ENCODE measurements at regions of chr12 and their contacts with region 1.

Region 1: DNA sequence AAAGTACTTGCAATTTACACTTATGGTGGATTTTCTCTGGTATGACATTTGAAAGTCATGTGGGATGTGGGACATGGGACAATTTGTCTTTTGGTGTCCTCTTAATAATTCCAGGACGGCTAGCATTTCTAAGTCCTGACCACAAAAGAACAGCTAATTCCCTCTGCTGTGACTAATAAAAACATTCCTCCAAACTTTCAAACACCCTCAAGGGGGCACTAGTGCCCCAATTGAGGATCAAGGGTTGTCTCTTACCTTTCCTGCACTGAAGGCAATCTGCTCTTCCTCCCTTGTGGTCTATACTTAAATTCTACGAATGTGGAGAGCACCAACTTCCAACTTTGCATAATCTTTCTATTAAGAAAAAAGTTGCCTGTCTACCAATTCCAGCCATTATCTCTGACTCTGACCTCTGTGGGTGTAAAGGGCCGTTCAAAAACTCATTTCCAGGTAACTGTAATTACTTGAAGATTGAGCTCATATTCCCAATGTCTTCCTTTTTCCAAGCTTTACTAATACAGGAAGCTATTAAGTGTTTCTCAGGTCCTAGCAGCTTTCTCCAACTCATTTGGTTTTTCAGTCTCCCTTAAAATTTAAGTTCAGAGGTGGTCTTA is 210.2 kb downstream of the PTPRO start:
- DNase-seq: peak; percentile 22 to 80 (median 44)
- ATAC-seq: peak; percentile 83
- H3K4me3 ChIP-seq: no peak overlapping the region
- H3K4me3 Mint-ChIP-seq: peak overlapping the region; percentile 62
- H3K27ac ChIP-seq: no peak overlapping the region
- H3K27ac Mint-ChIP-seq: peak overlapping the region; percentile 63
- H3K4me1 ChIP-seq: peaks cover 15% of the 10 kb centered on the region
- H3K4me1 Mint-ChIP-seq: peaks cover under 1% of the 10 kb centered on the region
- H3K27me3 ChIP-seq: no peaks in the 10 kb centered on the region
- H3K27me3 Mint-ChIP-seq: no peaks in the 10 kb centered on the region
- CTCF ChIP-seq: peak; percentile 78

Region 2: DNA sequence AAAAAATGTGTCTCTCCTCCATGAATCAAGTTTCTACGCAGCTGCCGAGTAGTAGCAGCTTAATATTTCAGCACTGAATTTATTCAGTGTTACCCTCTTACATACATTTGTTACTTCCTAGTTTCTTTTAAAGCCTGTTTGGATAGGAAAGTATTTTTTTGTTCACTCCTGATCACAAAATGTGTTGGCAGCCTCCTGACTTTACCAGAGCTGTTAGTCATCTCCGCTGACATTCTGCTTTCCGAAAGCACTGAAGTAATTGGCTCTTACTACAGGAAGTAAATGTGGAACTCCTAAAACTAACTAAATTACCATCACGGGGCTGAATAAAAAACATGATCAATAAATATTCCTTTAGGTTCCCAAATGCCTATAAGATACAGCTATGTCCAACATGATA is 31.2 kb after region 1 on chr12:
- CTCF ChIA-PET with region 1: interaction called, 9 read pairs
- POLR2A ChIA-PET with region 1: interaction called, 20 read pairs
- intact Hi-C with region 1: no loop called
- DNase-seq: peak in 4 of 14 experiments; percentile 57 to 72 (median 66)
- ATAC-seq: peak; percentile 85
- H3K4me3 ChIP-seq: peak overlapping the region; percentile 24
- H3K4me3 Mint-ChIP-seq: peak overlapping the region; percentile 56
- H3K27ac ChIP-seq: peak overlapping the region; percentile 64 to 76
- H3K27ac Mint-ChIP-seq: peak overlapping the region; percentile 85
- H3K4me1 ChIP-seq: peaks cover 10% of the 10 kb centered on the region
- H3K4me1 Mint-ChIP-seq: peaks cover 52% of the 10 kb centered on the region
- H3K27me3 ChIP-seq: no peaks in the 10 kb centered on the region
- H3K27me3 Mint-ChIP-seq: no peaks in the 10 kb centered on the region
- CTCF ChIP-seq: no peak

Region 3: DNA sequence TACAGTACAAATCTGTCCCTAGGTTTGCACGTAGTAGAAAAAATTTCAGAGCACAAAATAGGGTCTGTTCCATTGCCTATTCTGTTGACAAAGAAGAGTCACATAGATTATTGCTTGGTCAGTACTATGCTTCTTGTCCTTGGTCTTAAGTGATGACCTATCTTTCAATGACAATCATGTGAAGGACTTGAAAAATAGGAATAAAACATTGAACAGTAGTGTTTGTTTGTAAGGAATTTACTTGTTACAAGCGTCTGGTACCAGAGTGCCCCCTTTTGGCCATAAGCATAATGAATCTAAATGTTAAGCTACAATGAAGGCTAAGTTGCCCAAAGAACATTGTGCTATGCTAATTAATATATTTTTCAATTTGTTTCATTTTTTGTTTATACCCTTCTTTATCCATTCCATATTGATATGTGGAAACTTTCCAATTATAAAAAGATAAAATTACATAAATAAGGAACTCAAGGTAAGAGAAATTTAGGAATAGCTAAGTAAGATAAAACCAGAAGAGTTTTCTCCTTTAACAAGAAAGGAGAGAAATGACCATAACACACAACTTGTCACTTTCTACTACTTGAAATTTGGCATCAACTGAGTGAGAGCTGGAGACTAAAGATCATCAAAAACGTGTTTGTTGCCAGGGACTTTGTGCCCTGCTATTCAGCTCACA is 52.0 kb after region 1 on chr12:
- CTCF ChIA-PET with region 1: interaction called, 117 read pairs
- POLR2A ChIA-PET with region 1: interaction called, 24 read pairs
- intact Hi-C with region 1: loop called (anchors 1 kb)
- DNase-seq: peak in 8 of 14 experiments; percentile 7 to 85 (median 44)
- ATAC-seq: peak; percentile 61
- H3K4me3 ChIP-seq: no peak overlapping the region
- H3K4me3 Mint-ChIP-seq: no peak overlapping the region
- H3K27ac ChIP-seq: no peak overlapping the region
- H3K27ac Mint-ChIP-seq: no peak overlapping the region
- H3K4me1 ChIP-seq: no peaks in the 10 kb centered on the region
- H3K4me1 Mint-ChIP-seq: peaks cover 18% of the 10 kb centered on the region
- H3K27me3 ChIP-seq: no peaks in the 10 kb centered on the region
- H3K27me3 Mint-ChIP-seq: no peaks in the 10 kb centered on the region
- CTCF ChIP-seq: peak; percentile 77

Region 4: DNA sequence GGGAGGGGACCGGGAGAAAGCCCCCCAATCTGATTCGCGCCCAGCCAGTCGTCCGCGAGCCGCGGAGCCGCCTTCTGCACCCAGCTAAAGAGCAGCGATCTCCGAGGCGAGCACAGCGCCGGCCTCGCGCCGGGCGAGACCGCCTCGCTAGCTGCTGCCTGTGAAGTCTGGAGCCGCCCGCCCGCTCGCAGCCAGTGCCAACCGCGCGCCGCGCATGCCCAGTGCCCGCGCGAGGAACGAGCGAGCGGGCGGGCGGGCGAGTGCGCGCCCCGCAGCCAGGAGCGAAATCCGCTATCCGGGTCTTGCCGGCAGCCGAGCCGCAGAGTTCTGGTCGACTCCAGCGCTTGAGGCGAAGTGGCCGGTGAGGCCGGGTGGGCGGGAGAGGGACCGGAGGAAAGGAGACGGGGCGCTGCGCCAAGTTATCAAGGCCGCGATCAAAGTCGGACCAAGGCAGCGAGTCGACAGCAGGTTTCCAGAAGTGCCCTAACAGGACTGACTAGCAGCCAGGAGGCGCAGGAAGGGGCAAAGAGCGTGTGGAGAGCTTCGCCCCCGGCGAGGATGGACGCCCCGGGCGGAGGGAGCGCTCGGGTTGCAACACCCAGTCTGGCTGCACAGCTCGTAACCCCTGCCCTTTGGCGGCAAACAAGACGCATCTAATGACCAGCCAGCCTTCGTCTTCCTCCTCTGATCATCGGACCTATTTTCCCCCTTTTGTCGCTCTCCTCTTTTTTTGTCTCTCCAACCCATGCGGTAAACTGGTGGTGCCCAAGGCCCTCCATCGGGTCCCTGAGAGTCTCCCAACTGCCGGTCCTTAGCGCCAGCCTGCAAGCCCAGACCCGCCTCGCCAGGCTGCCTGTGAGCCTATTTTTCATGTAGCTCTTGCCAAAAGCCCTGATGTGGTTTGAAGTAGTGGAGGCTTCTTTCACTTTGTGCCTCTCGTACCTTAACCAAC is 257.0 kb after region 1 on chr12 and contains the start of gene EPS8:
- CTCF ChIA-PET with region 1: no interaction called
- POLR2A ChIA-PET with region 1: interaction called, 5 read pairs
- intact Hi-C with region 1: loop called in 1 of 2 experiments (anchors 10 kb)
- DNase-seq: peak; percentile 77 to 94 (median 86)
- ATAC-seq: peak; percentile 92
- H3K4me3 ChIP-seq: peak within 1 kb of the TSS; percentile 69
- H3K4me3 Mint-ChIP-seq: peak within 1 kb of the TSS; percentile 98
- H3K27ac ChIP-seq: no peak within 1 kb of the TSS
- H3K27ac Mint-ChIP-seq: peak within 1 kb of the TSS; percentile 60
- H3K4me1 ChIP-seq: peaks cover 19% of the 10 kb centered on the region
- H3K4me1 Mint-ChIP-seq: peaks cover 15% of the 10 kb centered on the region
- H3K27me3 ChIP-seq: peaks cover 3 to 38% of the 10 kb centered on the region in 2 experiments
- H3K27me3 Mint-ChIP-seq: peaks cover 60% of the 10 kb centered on the region
- CTCF ChIP-seq: no peak
- total RNA-seq, gene EPS8: 0.80 to 1.1 TPM

Measured in CD4-positive, alpha-beta T cell (primary cell).